ENCODE measurements at regions of chr16 and their contacts with region 1.

Region 1: GRCh38 chr16:20383106-20384029 is 21.2 kb downstream of the PDILT start:
- DNase-seq: no peak
- ATAC-seq: peak; percentile 94
- H3K4me3 ChIP-seq: no peak overlapping the region
- H3K27ac ChIP-seq: no peak overlapping the region
- H3K4me1 ChIP-seq: no peaks in the 10 kb centered on the region
- H3K27me3 ChIP-seq: no peaks in the 10 kb centered on the region
- CTCF ChIP-seq: peak; percentile 79 to 87 (median 80)
- EP300 ChIP-seq: no peak
- POLR2A ChIP-seq: no peak
- RAD21 ChIP-seq: peak; percentile 77

Region 2: GRCh38 chr16:19898924-19899604 is 484.3 kb before region 1 on chr16:
- CTCF ChIA-PET with region 1: interaction called, 83 read pairs
- POLR2A ChIA-PET with region 1: no interaction called
- RAD21 ChIA-PET with region 1: interaction called, 28 read pairs
- SMC1A ChIA-PET with region 1: interaction called, 24 read pairs
- in situ Hi-C with region 1: no loop called
- intact Hi-C with region 1: loop called (anchors 2 kb)
- DNase-seq: no peak
- ATAC-seq: peak; percentile 85
- H3K4me3 ChIP-seq: no peak overlapping the region
- H3K27ac ChIP-seq: no peak overlapping the region
- H3K4me1 ChIP-seq: no peaks in the 10 kb centered on the region
- H3K27me3 ChIP-seq: no peaks in the 10 kb centered on the region; a peak in 1 of 4 replicates
- CTCF ChIP-seq: peak; percentile 72 to 81 (median 79)
- EP300 ChIP-seq: no peak
- POLR2A ChIP-seq: no peak
- RAD21 ChIP-seq: peak; percentile 66

Region 3: DNA sequence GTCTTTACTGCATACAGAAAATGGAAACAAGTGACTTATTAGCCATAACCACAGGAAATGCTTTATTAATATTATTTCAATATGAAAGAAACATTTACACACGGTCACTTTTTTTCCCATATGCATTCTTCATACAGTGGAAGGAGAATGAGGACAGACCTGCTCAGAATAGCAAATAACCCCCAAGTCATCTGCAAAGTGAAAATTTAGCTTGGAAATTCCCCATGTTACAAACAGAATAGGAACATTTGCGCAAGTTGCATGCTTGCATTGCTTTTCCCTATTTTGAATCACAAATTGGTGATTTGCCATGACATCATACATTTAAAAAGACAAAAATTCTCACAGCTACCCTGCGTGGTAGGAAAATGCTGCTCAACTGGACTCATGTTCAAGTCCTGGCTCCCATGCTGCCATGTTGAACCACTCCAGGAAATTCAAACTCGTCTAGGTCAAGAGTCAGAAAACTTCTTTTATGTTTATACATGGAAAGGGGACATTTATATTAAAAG is 158.1 kb before region 1 on chr16:
- CTCF ChIA-PET with region 1: no interaction called
- POLR2A ChIA-PET with region 1: no interaction called
- RAD21 ChIA-PET with region 1: no interaction called
- SMC1A ChIA-PET with region 1: no interaction called
- in situ Hi-C with region 1: no loop called
- intact Hi-C with region 1: no loop called
- DNase-seq: no peak
- ATAC-seq: peak; percentile 76
- H3K4me3 ChIP-seq: no peak overlapping the region
- H3K27ac ChIP-seq: no peak overlapping the region
- H3K4me1 ChIP-seq: no peaks in the 10 kb centered on the region
- H3K27me3 ChIP-seq: no peaks in the 10 kb centered on the region
- CTCF ChIP-seq: no peak
- EP300 ChIP-seq: no peak
- POLR2A ChIP-seq: no peak
- RAD21 ChIP-seq: no peak

Region 4: DNA sequence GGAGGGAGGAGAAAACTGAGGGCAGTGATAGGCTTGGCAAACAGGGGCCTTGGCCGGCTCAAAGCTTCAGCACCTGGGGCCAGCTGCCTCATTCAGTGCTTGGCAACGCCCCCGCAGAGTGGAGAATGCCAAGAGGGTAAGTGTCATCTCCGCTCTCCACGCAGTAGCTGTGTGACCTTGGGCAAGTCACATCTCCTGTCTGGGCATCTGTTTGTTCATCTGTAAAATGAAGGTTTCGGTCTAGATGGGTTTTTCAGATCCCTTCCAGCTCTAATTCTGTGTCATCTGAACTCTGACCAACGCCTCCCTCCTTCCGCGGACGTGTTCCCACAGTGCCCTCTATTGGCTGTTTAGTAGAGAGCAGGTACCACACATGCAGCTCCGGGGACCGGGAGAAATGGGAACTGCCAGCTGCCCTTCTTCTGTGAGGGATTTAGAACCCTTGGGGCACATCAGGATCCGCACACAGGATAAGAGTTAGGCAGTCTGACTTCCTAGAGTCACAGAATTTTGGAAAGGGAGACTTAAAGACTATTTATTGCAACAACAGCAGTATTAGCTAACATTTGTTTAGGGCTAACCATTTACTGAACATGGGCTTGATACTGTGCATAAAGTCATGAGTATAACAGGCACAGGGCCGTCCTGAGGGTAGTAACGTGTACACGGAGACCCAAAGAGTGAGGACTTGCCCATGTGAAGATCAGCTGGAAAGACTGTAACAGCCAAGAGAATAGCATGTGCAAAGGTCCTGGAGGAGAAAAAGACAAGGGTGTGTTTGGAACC is 82.9 kb before region 1 on chr16:
- CTCF ChIA-PET with region 1: interaction called, 57 read pairs
- POLR2A ChIA-PET with region 1: no interaction called
- RAD21 ChIA-PET with region 1: interaction called, 25 read pairs
- SMC1A ChIA-PET with region 1: interaction called, 23 read pairs
- in situ Hi-C with region 1: no loop called
- intact Hi-C with region 1: loop called (anchors 1 kb)
- DNase-seq: peak; percentile 46
- ATAC-seq: peak; percentile 97
- H3K4me3 ChIP-seq: no peak overlapping the region
- H3K27ac ChIP-seq: no peak overlapping the region
- H3K4me1 ChIP-seq: no peaks in the 10 kb centered on the region
- H3K27me3 ChIP-seq: no peaks in the 10 kb centered on the region; a peak in 1 of 4 replicates
- CTCF ChIP-seq: peak; percentile 85 to 91 (median 87)
- EP300 ChIP-seq: no peak
- POLR2A ChIP-seq: no peak
- RAD21 ChIP-seq: peak; percentile 88

Region 5: GRCh38 chr16:20372701-20373100 is 10.7 kb before region 1 on chr16:
- CTCF ChIA-PET with region 1: interaction called, 44 read pairs
- POLR2A ChIA-PET with region 1: no interaction called
- RAD21 ChIA-PET with region 1: no interaction called
- SMC1A ChIA-PET with region 1: interaction called, 4 read pairs
- in situ Hi-C with region 1: no loop called
- intact Hi-C with region 1: no loop called
- DNase-seq: no peak
- ATAC-seq: no peak
- H3K4me3 ChIP-seq: no peak overlapping the region
- H3K27ac ChIP-seq: no peak overlapping the region
- H3K4me1 ChIP-seq: no peaks in the 10 kb centered on the region
- H3K27me3 ChIP-seq: peaks cover 0 to 2% of the 10 kb centered on the region in 2 experiments; a peak in 2 of 4 replicates
- CTCF ChIP-seq: no peak
- EP300 ChIP-seq: no peak
- POLR2A ChIP-seq: no peak
- RAD21 ChIP-seq: no peak

Region 6: DNA sequence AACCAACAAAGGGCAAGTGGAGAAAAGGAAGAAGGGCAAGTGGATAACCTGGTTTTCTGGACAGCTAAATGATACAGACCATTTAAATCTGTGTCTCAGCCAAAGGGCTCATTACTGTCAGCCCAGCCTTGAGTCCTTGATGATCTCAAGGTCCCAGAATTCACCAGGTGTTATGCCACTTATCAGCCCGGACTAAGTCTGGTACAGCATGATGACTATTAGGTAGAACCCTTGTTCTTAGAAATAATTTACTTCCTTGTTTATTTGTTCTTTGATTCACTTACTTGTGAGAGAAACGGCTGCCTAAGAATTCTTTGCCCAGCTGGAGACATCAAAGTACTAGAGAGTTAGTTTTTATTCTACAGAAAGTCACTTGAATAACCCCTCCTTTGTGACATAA is 17.7 kb after region 1 on chr16:
- CTCF ChIA-PET with region 1: interaction called, 22 read pairs
- POLR2A ChIA-PET with region 1: no interaction called
- RAD21 ChIA-PET with region 1: no interaction called
- SMC1A ChIA-PET with region 1: no interaction called
- in situ Hi-C with region 1: no loop called
- intact Hi-C with region 1: no loop called
- DNase-seq: no peak
- ATAC-seq: no peak
- H3K4me3 ChIP-seq: no peak overlapping the region
- H3K27ac ChIP-seq: no peak overlapping the region
- H3K4me1 ChIP-seq: no peaks in the 10 kb centered on the region
- H3K27me3 ChIP-seq: no peaks in the 10 kb centered on the region
- CTCF ChIP-seq: no peak
- EP300 ChIP-seq: no peak
- POLR2A ChIP-seq: no peak
- RAD21 ChIP-seq: no peak

Measured in GM12878 (cell line).